MCF 10A (cell line): ENCODE measurements at regions of chr4 and their contacts with region 1.

Region 1: DNA sequence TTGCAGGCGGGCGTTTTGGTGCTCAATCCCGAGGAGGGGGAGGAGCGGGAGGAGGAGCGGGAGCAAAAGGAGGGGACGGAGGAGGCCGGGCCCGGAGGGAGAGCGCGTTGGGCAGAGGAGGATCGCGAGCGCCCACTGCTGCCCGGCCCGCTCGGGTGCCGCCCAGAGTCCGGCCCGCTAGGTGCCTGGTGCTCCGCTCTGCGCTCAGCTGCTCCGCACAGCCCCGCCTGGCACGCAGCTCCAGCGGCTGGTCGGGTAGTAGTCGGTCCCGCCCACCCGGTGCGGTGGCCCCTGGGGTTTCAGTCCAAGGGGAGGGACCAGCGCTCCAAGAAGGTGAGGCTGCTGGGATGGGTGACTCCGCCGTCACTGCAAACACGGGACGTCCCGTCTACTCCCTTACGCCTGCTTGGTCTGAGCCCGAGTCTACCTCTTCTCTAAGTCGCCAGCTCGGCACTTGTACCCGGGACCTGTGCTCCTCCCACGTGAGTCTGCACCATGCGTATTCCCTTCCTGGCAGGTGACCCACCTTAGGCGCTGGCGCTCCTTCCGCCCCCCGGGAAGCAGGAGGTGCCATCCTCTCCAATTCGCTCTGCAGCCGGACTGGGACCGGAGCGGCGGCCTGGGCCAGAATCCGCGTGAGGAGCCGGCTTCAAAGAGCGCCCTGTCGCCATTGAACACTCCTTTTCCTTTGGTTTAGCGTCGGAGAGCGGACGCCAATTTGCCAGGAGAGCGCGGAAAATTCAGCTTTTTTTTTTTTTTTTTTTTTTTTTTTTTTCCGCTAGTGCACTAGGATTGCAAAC is 405 bp upstream of the HS3ST1 start:
- DNase-seq: peak; percentile 88
- H3K4me3 Mint-ChIP-seq: peak overlapping the region; percentile 83
- H3K27ac Mint-ChIP-seq: no peak overlapping the region
- H3K4me1 Mint-ChIP-seq: peaks cover 10% of the 10 kb centered on the region
- H3K27me3 Mint-ChIP-seq: peaks cover 11% of the 10 kb centered on the region
- CTCF ChIP-seq: peak; percentile 81

Region 2: DNA sequence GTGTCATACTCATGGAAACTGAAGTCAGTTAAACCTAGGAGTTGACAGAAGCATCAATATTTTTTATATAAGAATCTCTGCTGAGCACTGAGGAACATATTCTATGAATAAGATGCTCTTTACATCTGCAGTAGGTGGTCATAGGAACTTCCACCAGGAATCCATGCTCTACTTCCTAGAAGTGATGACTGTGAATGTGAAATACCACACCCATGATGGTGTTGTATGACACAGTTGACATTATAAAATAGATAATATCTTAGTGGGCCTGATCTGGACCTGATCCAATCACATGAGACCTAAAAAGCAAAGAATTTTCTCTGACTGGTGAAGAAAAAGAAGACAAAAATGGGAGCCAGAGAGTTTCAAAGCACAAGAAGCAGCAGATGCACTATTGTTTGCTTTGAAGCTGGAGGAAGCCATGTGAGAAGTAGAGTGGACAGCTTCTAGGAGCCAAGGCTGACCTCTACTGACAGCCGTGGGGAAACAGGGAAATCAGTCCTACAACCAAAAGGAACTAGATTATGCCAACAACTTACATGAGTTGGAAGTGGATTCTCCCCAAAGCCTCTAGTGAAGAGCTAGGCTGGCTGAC is 68.2 kb after region 1 on chr4:
- CTCF ChIA-PET with region 1: interaction called, 7 read pairs
- POLR2A ChIA-PET with region 1: interaction called, 6 read pairs
- intact Hi-C with region 1: loop called (anchors 5 kb)
- DNase-seq: peak; percentile 27
- H3K4me3 Mint-ChIP-seq: no peak overlapping the region
- H3K27ac Mint-ChIP-seq: no peak overlapping the region
- H3K4me1 Mint-ChIP-seq: peaks cover 29% of the 10 kb centered on the region
- H3K27me3 Mint-ChIP-seq: no peaks in the 10 kb centered on the region
- CTCF ChIP-seq: no peak

Region 3: DNA sequence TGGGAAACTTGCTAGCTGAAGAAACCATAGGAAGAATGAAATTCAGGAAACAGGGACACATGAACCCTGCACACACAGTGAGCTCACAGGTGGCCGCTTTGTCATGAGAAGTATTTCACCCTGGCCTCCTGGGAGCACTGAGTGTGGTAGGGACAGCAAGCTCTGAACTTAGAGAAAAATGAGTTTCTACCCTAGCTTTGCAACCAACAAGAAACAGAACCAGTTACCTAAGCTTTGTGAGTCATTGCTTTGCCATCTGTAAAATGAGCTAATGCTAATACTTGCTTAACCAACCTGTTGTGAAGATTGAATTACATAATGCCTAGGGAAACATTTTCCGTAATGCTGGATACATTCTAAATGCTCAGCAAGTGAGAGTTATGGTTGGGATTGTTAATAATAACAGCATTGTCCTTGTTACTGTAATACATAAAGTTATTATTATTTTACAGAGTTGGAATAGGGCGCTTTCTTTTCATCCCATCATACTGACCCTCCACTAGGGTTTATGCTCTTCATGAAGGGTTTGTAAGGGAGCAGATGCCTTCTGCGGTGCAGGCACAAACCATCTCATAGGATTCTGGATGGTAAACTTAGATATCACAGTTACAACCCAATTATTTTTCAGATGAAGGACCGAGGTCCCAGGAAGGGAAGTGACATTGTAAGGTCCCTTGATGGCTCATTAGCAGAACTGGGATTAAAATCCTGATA is 206.4 kb after region 1 on chr4:
- CTCF ChIA-PET with region 1: no interaction called
- POLR2A ChIA-PET with region 1: interaction called, 4 read pairs
- intact Hi-C with region 1: loop called (anchors 5 kb)
- DNase-seq: peak; percentile 88
- H3K4me3 Mint-ChIP-seq: no peak overlapping the region
- H3K27ac Mint-ChIP-seq: peak overlapping the region; percentile 49
- H3K4me1 Mint-ChIP-seq: peaks cover 39% of the 10 kb centered on the region
- H3K27me3 Mint-ChIP-seq: no peaks in the 10 kb centered on the region
- CTCF ChIP-seq: no peak

Region 4: GRCh38 chr4:11720292-11720691 is 291.2 kb after region 1 on chr4:
- CTCF ChIA-PET with region 1: interaction called, 8 read pairs
- POLR2A ChIA-PET with region 1: interaction called, 3 read pairs
- intact Hi-C with region 1: loop called (anchors 1 kb)
- DNase-seq: peak; percentile 63
- H3K4me3 Mint-ChIP-seq: no peak overlapping the region
- H3K27ac Mint-ChIP-seq: no peak overlapping the region
- H3K4me1 Mint-ChIP-seq: no peaks in the 10 kb centered on the region
- H3K27me3 Mint-ChIP-seq: no peaks in the 10 kb centered on the region
- CTCF ChIP-seq: peak; percentile 82